ENCODE measurements at regions of chr2 and their contacts with region 1.

Region 1: DNA sequence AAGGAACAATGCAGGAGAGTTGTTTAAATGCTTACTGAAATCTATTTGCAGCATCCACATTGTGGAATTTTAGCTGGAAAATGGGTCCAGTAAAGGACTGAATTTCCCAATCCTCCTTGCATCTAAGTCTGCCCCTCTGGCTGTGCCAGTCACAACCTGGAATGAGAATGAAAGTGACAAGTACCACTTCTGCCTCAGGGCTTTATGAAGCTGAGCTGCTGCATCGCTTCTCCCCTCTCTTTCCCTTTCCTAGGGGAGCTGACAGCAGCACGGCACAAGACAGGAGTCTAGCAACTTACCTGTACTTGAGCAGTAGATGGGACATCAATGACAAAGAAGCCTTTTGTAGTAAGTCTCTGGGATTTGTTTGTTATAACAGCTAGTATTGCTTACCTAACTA is 27.3 kb upstream of the THSD7B start:
- DNase-seq: no peak
- H3K4me3 ChIP-seq: no peak overlapping the region
- H3K27ac ChIP-seq: no peak overlapping the region
- H3K4me1 ChIP-seq: peaks cover 3% of the 10 kb centered on the region
- H3K27me3 ChIP-seq: peaks cover 3% of the 10 kb centered on the region
- CTCF ChIP-seq: no peak

Region 2: GRCh38 chr2:136281281-136282114 is 456.5 kb before region 1 on chr2:
- intact Hi-C with region 1: no loop called
- DNase-seq: no peak
- H3K4me3 ChIP-seq: no peak overlapping the region
- H3K27ac ChIP-seq: no peak overlapping the region
- H3K4me1 ChIP-seq: no peaks in the 10 kb centered on the region
- H3K27me3 ChIP-seq: peaks cover 18% of the 10 kb centered on the region
- CTCF ChIP-seq: no peak

Region 3: GRCh38 chr2:136411946-136412345 is 326.1 kb before region 1 on chr2:
- intact Hi-C with region 1: loop called (anchors 10 kb)
- DNase-seq: no peak
- H3K4me3 ChIP-seq: no peak overlapping the region
- H3K27ac ChIP-seq: no peak overlapping the region
- H3K4me1 ChIP-seq: no peaks in the 10 kb centered on the region
- H3K27me3 ChIP-seq: peaks cover 56% of the 10 kb centered on the region
- CTCF ChIP-seq: no peak

Region 4: GRCh38 chr2:136809998-136810397 is 72.0 kb after region 1 on chr2:
- intact Hi-C with region 1: no loop called
- DNase-seq: no peak
- H3K4me3 ChIP-seq: no peak overlapping the region
- H3K27ac ChIP-seq: no peak overlapping the region
- H3K4me1 ChIP-seq: no peaks in the 10 kb centered on the region
- H3K27me3 ChIP-seq: no peaks in the 10 kb centered on the region
- CTCF ChIP-seq: no peak

Region 5: DNA sequence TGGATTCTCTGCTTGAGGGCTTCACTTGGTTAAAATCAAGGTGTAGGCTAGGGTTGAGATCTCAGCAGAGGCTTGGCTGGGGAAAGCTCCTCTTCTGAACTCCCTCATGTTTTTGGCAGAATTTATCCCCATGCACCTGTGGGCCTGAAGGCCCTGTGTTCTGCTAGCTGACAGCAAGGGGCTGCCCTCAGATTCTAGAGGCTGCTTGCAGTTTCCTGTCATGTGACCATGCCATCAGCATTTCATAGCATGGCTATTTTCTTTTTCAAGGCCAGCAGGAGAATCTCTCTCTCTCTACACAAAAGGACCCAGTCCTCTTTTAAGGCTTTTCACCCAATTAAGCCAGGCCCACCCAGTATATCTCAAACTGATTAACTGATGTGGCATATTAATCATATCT is 711.4 kb after region 1 on chr2:
- intact Hi-C with region 1: no loop called
- DNase-seq: no peak
- H3K4me3 ChIP-seq: no peak overlapping the region
- H3K27ac ChIP-seq: no peak overlapping the region
- H3K4me1 ChIP-seq: no peaks in the 10 kb centered on the region
- H3K27me3 ChIP-seq: no peaks in the 10 kb centered on the region
- CTCF ChIP-seq: no peak

Measured in left ventricle myocardium inferior (tissue), 1 donor.